Head of caudate nucleus (tissue), 42 donors: ENCODE measurements at regions of chr14 and their contacts with region 1.

Region 1: DNA sequence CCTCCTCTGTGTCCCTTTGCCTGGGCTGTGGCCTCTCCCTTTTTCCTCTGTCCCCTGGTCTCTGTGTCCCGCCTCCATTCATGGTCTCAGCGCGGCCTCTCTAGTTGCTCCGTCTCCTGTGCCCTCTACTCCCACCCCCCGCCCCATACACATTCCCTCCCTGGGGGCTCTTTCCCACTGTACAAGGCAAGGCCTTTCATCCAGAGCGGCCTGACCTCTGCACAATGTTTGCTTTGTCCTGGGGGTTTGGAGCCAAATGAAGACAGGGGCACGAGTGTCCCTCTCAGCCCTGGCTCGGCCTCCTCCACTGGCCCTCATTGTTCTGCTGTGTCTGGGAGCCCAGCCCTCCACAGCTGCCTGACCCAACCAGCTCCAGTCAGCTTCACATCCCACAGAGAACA is 678.6 kb downstream of the BCL11B start:
- DNase-seq: peak; percentile 74 to 96 (median 91)

Region 2: DNA sequence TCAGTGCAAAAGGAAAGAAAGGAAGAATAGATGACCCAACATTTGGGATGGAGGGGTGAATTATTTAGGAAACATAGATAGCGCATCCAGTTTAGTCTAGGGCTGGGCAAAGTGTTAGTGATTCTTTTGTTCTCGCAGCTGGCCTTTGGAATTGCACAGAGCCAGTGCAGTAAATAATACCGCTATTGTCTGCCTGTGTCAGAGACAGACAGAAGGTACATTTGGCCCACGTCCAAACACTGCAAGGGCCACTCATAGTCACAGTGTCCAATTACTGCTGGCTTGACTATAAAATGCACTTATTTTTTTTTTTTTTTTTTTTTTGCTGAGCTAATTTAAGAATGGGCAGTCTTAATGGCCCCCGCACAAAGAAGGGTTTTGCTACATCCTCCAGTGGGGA is 40.0 kb after region 1 on chr14:
- intact Hi-C with region 1: loop called (anchors 2 kb)
- DNase-seq: peak; percentile 29 to 95 (median 84)

Region 3: GRCh38 chr14:98692857-98693256 is 99.5 kb after region 1 on chr14:
- intact Hi-C with region 1: no loop called
- DNase-seq: no peak